Activated T-helper 1 cell treated with anti-CD3 and anti-CD28 coated beads, Interleukin-12 subunit alpha, Interleukin-12 subunit beta, Interleukin-2, Interleukin-4 antibody, amounts not matched to agents 30 ng/mL and 10 ng/mL and 1 ng/mL, durations not matched to agents 14 hours and 24 hours and 36 hours (primary cell): ENCODE measurements at regions of chr6 and their contacts with region 1.

Region 1: DNA sequence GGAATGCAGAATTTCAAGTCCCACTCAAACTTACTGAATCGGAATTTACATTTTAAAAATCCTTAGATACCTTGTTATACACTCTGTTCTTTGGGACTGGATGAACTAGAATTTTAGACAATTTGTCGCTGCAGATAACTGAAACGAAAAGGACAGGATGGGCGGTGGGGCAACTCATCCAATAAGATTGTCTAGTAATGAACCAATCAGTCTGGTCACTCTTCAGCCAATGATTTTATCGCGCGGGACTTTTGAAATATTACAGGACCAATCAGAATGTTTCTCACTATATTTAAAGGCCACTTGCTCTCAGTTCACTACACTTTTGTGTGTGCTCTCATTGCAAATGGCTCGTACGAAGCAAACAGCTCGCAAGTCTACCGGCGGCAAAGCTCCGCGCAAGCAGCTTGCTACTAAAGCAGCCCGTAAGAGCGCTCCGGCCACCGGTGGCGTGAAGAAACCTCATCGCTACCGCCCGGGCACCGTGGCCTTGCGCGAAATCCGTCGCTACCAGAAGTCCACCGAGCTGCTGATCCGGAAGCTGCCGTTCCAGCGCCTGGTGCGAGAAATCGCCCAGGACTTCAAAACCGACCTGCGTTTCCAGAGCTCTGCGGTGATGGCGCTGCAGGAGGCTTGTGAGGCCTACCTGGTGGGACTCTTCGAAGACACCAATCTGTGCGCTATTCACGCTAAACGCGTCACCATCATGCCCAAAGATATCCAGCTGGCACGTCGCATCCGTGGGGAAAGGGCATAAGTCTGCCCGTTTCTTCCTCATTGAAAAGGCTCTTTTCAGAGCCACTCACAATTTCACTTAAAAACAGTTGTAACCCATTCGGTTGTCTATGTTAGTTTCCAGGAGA is 41.9 kb upstream of the HFE start:
- DNase-seq: peak; percentile 82
- H3K4me3 Mint-ChIP-seq: peak overlapping the region; percentile 86
- H3K27ac Mint-ChIP-seq: peak overlapping the region; percentile 98
- H3K4me1 Mint-ChIP-seq: peaks cover 49% of the 10 kb centered on the region
- H3K27me3 Mint-ChIP-seq: no peaks in the 10 kb centered on the region

Region 2: DNA sequence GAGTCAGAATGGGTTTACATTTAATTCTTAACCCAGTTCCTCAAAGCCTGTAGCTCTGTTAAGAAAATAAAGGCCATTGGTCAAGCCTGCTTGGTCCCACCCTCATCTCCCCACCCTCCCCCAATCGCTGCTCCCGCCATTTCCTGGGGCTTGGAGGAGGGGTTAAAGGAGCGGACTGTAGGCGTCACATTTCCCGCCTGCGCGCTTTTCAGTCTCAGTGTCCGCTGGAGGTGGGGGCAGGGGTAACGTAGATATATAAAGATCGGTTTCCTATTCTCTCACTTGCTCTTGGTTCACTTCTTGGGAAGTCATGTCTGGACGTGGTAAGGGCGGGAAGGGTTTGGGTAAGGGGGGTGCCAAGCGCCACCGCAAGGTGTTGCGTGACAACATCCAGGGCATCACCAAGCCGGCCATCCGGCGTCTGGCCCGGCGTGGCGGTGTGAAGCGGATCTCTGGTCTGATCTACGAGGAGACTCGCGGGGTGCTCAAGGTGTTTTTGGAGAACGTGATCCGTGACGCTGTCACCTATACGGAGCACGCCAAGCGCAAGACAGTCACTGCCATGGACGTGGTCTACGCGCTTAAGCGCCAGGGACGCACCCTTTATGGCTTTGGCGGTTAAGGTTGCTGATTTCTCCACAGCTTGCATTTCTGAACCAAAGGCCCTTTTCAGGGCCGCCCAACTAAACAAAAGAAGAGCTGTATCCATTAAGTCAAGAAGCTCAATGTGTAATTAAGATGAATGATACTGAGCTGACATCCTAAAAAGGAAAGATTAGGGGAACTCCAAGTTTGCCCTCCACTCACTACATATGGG is 23.7 kb before region 1 on chr6:
- intact Hi-C with region 1: no loop called
- DNase-seq: peak; percentile 84
- H3K4me3 Mint-ChIP-seq: peak overlapping the region; percentile 98
- H3K27ac Mint-ChIP-seq: peak overlapping the region; percentile 100
- H3K4me1 Mint-ChIP-seq: peaks cover 71% of the 10 kb centered on the region
- H3K27me3 Mint-ChIP-seq: peaks cover 2% of the 10 kb centered on the region

Region 3: GRCh38 chr6:26097268-26097875 is 52.1 kb after region 1 on chr6:
- intact Hi-C with region 1: loop called (anchors 1 kb)
- DNase-seq: peak; percentile 49
- H3K4me3 Mint-ChIP-seq: no peak overlapping the region
- H3K27ac Mint-ChIP-seq: no peak overlapping the region
- H3K4me1 Mint-ChIP-seq: peaks cover 21% of the 10 kb centered on the region
- H3K27me3 Mint-ChIP-seq: peaks cover 11% of the 10 kb centered on the region

Region 4: DNA sequence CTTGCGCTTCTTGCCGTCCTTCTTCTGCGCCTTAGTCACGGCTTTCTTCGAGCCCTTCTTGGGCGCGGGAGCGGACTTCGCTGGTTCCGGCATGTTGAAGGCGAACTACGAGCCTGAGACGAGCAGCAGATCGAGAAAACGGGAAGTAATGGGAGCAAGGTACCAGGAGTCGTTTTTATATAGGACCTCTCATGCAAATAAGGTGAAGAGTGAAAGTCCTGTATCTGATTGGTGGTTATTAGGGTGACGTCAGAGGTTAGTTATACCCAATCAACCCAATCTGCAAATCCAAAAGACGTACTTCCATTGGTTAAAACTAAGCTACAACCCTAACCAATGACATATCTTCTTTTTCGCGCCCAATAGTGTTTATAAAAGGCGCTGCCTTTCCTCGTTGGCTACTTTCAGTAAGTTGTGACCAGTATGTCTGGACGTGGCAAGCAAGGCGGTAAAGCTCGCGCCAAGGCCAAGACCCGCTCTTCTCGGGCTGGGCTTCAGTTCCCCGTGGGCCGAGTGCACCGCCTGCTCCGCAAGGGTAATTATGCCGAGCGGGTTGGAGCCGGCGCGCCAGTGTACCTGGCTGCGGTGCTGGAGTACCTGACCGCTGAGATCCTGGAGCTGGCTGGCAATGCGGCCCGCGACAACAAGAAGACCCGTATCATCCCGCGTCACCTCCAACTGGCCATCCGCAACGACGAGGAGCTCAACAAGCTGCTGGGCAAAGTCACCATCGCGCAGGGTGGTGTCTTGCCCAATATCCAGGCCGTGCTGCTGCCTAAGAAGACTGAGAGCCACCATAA is 1101.6 kb after region 1 on chr6:
- intact Hi-C with region 1: loop called (anchors 5 kb)
- DNase-seq: peak; percentile 82
- H3K4me3 Mint-ChIP-seq: no peak overlapping the region
- H3K27ac Mint-ChIP-seq: no peak overlapping the region
- H3K4me1 Mint-ChIP-seq: peaks cover 17% of the 10 kb centered on the region
- H3K27me3 Mint-ChIP-seq: no peaks in the 10 kb centered on the region